Heart left ventricle (tissue), 16 donors: ENCODE measurements at regions of chr17 and their contacts with region 1.

Region 1: DNA sequence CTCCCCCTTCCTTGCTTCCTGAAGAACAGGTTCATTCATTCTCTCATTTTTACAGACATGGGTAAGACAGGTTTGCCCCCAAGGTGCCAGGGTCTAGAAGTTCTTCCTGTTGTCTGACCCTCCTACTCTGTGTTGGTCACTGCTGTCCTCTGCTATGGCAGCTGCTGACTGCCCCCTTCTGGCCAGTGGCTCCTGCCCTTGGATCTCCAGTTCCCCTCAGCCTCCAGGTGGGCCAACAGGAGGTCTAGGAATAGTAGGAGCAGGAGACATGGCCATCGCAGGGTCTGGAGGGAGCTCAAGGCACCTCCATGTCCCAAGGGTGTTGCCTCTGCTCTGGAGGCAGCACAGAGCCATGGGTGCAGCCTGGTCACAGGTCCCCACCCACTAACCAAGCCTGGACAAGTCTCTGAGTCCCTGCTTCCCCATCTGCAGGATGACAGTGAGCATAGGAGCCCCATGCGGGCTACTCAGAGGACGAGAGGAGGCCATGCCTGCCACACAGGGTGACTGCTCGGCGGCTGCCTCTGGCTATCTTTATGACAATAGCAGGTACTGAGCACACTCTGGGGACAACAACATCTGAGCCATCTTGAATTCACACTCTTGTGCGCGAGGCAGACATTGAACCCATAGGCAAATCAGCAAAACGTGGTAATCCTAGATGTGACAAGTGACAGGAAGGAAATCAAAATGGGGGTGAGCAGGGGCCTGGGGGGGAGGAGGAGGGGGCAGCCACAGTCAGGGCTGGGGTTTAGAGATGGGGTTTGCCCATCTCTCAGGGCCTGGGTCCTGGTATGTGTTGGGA is 27.0 kb upstream of the NXPH3 start:
- DNase-seq: peak in 2 of 5 donors; percentile 57 to 64
- ATAC-seq: peak; percentile 37 to 77 (median 63)
- H3K4me3 ChIP-seq: no peak overlapping the region
- H3K27ac ChIP-seq: no peak overlapping the region
- H3K4me1 ChIP-seq: peaks cover 0 to 17% (median 5%) of the 10 kb centered on the region in 12 donors
- H3K27me3 ChIP-seq: no peaks in the 10 kb centered on the region
- CTCF ChIP-seq: peak; percentile 37 to 71 (median 59)
- POLR2A ChIP-seq: no peak

Region 2: GRCh38 chr17:49315551-49316257 is 233.0 kb before region 1 on chr17:
- intact Hi-C with region 1: loop called in 5 of 10 experiments (anchors 5 to 10 kb)
- DNase-seq: peak in 4 of 5 donors; percentile 68 to 71 (median 69)
- ATAC-seq: peak; percentile 92 to 99 (median 98)
- H3K4me3 ChIP-seq: peak overlapping the region in 3 of 12 donors; percentile 6 to 20 (median 7)
- H3K27ac ChIP-seq: peak overlapping the region in 1 of 12 donors; percentile 35
- H3K4me1 ChIP-seq: peaks cover 0 to 23% (median 0%) of the 10 kb centered on the region in 12 donors
- H3K27me3 ChIP-seq: no peaks in the 10 kb centered on the region
- CTCF ChIP-seq: peak; percentile 61 to 92 (median 82)
- POLR2A ChIP-seq: no peak

Region 3: DNA sequence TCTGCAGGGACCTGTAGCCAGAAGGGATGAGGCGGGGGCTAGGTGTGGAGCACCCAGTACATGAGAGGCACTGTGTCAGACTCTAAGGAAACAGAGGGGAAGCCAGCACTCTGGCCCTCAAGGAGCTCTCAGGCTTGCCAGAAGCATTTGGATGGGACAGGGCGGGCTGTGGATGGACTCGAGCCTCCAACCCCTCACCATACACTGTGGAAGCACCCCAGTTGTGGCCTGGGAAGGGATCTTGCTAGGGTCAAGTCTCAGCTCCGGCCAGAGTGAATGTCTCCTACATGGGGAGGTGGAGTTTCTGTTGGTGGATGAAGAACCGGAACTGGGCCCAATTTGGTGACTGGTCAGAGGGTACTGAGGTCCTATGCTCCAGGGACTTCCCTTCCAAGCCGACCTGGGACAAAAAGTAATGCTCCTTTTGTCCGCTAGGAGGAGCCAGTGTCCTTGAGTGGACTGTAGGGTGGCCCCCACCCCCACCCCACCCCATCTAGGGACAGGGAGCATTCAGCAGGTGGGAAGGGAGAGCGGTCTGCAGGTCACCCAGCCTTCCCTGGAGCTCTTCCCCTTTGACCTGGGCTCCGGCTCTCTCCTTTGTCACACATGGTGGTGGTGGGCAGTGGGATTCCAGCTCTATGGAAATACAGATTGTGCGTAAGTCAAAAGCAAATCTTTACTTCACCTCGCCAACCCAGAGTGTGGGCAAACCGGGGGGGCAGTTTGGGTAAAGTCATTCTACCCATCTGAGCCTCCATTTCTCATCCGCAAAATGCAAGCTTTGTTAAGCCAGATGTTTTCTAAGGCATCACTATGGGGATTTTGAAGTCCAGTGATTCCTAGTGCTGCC is 113.7 kb before region 1 on chr17:
- intact Hi-C with region 1: loop called in 3 of 10 experiments (anchors 2 to 5 kb)
- DNase-seq: peak in 1 of 5 donors; percentile 19
- ATAC-seq: peak; percentile 53 to 76 (median 66)
- H3K4me3 ChIP-seq: no peak overlapping the region
- H3K27ac ChIP-seq: no peak overlapping the region
- H3K4me1 ChIP-seq: no peaks in the 10 kb centered on the region
- H3K27me3 ChIP-seq: peaks cover 2 to 30% (median 19%) of the 10 kb centered on the region in 9 donors
- CTCF ChIP-seq: peak; percentile 53 to 80 (median 73)
- POLR2A ChIP-seq: no peak

Region 4: DNA sequence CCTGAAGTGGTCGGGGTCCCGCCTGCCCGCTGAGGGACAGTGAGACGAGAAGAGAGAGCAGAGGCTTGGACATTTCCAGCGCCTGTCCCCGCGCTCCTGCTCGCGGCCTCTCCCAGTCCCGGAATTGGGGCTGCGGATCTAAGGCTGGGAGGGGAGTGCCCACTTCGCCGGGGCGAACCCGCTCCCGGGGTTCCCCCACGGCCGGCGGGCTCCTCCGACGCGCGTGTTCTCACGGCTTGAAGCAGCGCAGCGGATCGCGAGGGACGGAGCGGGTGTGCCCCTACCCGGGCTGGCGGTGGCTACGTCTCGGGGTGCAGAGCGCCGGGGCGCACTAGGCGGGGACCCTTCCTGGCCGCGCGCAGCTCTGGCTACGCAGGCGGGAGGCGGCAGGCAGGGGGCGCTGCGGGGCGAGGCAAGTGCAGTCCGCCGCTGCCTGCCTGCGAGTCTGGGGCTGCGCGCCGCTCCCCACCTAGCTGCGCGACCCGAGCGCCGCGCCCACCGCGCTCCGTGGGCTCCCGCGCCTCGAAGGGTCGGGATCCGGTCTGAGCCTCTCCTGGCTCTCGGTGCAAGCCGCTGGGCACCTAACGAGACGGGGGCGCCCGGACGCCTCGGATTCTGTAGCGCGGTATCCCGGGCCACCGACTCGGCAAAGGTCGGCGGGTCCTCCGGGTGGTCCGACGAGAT is 52.4 kb before region 1 on chr17:
- intact Hi-C with region 1: loop called in 5 of 10 experiments (anchors 2 to 5 kb)
- DNase-seq: peak; percentile 76 to 90 (median 82)
- ATAC-seq: peak; percentile 63 to 88 (median 79)
- H3K4me3 ChIP-seq: peak overlapping the region; percentile 29 to 76 (median 56)
- H3K27ac ChIP-seq: peak overlapping the region in 3 of 12 donors; percentile 5 to 32 (median 22)
- H3K4me1 ChIP-seq: peaks cover 0 to 38% (median 25%) of the 10 kb centered on the region in 12 donors
- H3K27me3 ChIP-seq: peaks cover 17 to 70% (median 49%) of the 10 kb centered on the region in 9 donors
- CTCF ChIP-seq: peak; percentile 68 to 94 (median 88)
- POLR2A ChIP-seq: no peak

Region 5: GRCh38 chr17:49515196-49515770 is 33.4 kb before region 1 on chr17:
- intact Hi-C with region 1: loop called in 1 of 10 experiments (anchors 5 kb)
- DNase-seq: peak; percentile 90 to 97 (median 93)
- ATAC-seq: peak; percentile 93 to 98 (median 98)
- H3K4me3 ChIP-seq: no peak overlapping the region
- H3K27ac ChIP-seq: peak overlapping the region; percentile 38 to 90 (median 74)
- H3K4me1 ChIP-seq: peaks cover 0 to 45% (median 26%) of the 10 kb centered on the region in 12 donors
- H3K27me3 ChIP-seq: peaks cover 0 to 5% (median 0%) of the 10 kb centered on the region in 9 donors
- CTCF ChIP-seq: peak in 7 of 12 donors; percentile 22 to 59 (median 42)
- POLR2A ChIP-seq: no peak